AG04449 (cell line): ENCODE measurements at regions of chr5 and their contacts with region 1.

Region 1: DNA sequence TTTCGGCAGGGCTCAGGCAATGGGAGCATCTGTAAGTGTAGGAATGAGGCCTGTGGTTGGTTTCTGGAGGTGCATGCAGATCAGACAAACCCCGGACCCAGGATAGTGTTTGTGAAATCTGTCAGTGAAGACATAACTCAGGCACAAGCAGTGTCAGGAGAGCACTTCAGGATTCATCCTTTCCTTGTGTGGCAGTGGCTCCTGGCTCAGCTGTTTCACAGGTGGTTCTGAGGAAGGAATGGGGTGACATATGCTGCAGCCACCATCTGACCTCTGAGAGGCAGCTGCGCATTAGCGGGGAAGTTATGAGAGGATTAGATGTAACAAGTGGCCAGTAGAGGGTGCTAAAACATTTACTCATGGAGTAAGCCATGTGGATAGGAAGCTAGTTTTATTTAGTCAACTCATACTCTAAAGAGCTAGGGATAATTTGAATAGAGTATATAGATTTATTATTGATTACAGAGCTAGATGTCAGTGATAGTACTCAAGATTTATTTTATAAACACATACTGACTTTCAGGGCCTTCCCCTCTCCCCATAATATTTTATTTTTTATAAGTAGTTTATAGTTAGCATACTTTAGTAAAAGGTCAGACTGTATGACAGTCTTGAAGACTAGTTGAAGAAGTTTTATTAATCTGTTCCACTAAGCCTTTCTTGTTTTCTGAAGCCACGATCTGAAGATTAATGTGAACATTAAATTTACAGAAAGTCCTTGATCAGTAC is 28.4 kb downstream of the NNT start:
- DNase-seq: peak; percentile 51
- H3K4me3 ChIP-seq: no peak overlapping the region
- CTCF ChIP-seq: peak; percentile 64

Region 2: GRCh38 chr5:43602461-43603343 is 28.6 kb before region 1 on chr5 and contains the start of gene NNT:
- CTCF ChIA-PET with region 1: interaction called, 18 read pairs
- POLR2A ChIA-PET with region 1: interaction called, 3 read pairs
- DNase-seq: no peak
- H3K4me3 ChIP-seq: peak within 1 kb of the TSS; percentile 79
- CTCF ChIP-seq: no peak

Region 3: GRCh38 chr5:43616535-43616934 is 14.8 kb before region 1 on chr5:
- CTCF ChIA-PET with region 1: interaction called, 73 read pairs
- POLR2A ChIA-PET with region 1: no interaction called
- DNase-seq: no peak
- H3K4me3 ChIP-seq: no peak overlapping the region
- CTCF ChIP-seq: no peak

Region 4: DNA sequence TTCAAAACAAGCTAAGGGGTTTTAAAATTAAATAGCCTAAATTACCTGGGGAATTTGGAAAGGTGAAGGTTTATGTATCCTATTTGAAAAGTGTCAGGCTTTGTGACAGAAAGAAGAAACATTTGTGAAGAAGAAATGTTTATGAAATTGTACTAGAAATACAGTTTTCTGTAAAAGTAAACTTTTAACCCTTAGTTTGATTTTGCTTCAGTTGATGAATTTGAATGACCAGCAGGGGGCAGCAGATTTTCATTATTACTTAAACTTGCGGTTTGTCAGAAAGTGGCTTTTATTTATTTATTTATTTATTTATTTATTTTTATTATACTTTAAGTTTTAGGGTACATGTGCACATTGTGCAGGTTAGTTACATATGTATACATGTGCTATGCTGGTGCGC is 29.8 kb after region 1 on chr5:
- CTCF ChIA-PET with region 1: interaction called, 20 read pairs
- POLR2A ChIA-PET with region 1: no interaction called
- DNase-seq: no peak
- H3K4me3 ChIP-seq: no peak overlapping the region
- CTCF ChIP-seq: no peak

Region 5: GRCh38 chr5:43769571-43770355 is 138.4 kb after region 1 on chr5:
- CTCF ChIA-PET with region 1: no interaction called
- POLR2A ChIA-PET with region 1: no interaction called
- DNase-seq: peak; percentile 59
- H3K4me3 ChIP-seq: no peak overlapping the region
- CTCF ChIP-seq: no peak

Region 6: GRCh38 chr5:43917925-43918324 is 286.6 kb after region 1 on chr5:
- CTCF ChIA-PET with region 1: no interaction called
- POLR2A ChIA-PET with region 1: no interaction called
- DNase-seq: no peak
- H3K4me3 ChIP-seq: no peak overlapping the region
- CTCF ChIP-seq: no peak

Region 7: GRCh38 chr5:44332285-44332971 is 701.1 kb after region 1 on chr5:
- CTCF ChIA-PET with region 1: interaction called, 67 read pairs
- POLR2A ChIA-PET with region 1: no interaction called
- DNase-seq: peak; percentile 2
- H3K4me3 ChIP-seq: no peak overlapping the region
- CTCF ChIP-seq: peak; percentile 27